Heart right ventricle (tissue), 16 donors: ENCODE measurements at regions of chr5 and their contacts with region 1.

Region 1: DNA sequence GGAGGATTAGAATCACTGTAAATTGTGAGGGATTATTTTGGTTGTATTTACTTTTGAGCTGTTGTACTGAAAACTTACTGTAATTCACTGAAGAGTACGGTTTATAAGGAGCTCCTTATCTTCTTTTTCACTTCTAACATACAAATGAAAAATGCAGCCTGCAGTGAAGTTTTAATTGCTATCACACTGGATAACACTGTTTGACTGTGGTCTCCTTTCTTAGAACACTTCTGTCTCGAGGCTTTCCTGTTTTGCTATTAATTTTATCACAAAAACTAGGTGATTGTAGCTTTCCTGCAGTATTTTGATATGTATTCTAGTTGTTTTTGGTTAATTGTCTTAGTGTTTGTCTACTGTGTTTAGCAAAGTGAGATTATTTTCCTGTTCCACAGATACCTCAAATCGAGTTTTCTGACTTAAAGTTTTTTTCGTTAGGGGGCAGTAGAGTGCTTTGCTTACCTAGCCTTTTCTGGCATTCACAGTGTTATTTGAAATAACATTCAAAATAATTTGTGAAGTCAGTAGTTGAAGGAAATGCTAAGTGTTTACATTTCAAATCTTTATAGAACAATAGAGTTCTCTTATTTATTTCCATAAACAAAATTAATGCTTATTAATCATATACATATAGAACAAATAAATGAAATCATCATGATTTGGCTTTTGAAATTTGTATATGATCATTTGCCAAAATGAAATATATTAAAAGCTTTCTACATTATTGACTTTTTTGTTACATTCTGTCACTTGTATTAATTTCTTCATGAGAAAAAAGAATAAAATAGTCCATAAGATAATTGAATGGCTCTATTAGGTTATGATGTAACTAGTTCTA is 52.9 kb downstream of the COMMD10 start:
- DNase-seq: peak in 1 of 2 donors; percentile 10
- ATAC-seq: peak in 2 of 8 donors; percentile 17 to 49
- H3K4me3 ChIP-seq: no peak overlapping the region
- H3K27ac ChIP-seq: no peak overlapping the region
- H3K4me1 ChIP-seq: peaks cover 0 to 22% (median 9%) of the 10 kb centered on the region in 9 donors
- H3K27me3 ChIP-seq: no peaks in the 10 kb centered on the region
- CTCF ChIP-seq: peak; percentile 75 to 93 (median 81)

Region 2: GRCh38 chr5:116361171-116361967 is 223.6 kb after region 1 on chr5:
- intact Hi-C with region 1: loop called in 1 of 10 experiments (anchors 5 kb)
- DNase-seq: peak; percentile 62 to 78
- ATAC-seq: peak; percentile 59 to 87 (median 77)
- H3K4me3 ChIP-seq: peak overlapping the region in 9 of 10 donors; percentile 33 to 63 (median 48)
- H3K27ac ChIP-seq: peak overlapping the region in 9 of 10 donors; percentile 15 to 80 (median 71)
- H3K4me1 ChIP-seq: peaks cover 14 to 44% (median 38%) of the 10 kb centered on the region in 9 donors
- H3K27me3 ChIP-seq: no peaks in the 10 kb centered on the region
- CTCF ChIP-seq: peak in 8 of 9 donors; percentile 5 to 68 (median 38)

Region 3: DNA sequence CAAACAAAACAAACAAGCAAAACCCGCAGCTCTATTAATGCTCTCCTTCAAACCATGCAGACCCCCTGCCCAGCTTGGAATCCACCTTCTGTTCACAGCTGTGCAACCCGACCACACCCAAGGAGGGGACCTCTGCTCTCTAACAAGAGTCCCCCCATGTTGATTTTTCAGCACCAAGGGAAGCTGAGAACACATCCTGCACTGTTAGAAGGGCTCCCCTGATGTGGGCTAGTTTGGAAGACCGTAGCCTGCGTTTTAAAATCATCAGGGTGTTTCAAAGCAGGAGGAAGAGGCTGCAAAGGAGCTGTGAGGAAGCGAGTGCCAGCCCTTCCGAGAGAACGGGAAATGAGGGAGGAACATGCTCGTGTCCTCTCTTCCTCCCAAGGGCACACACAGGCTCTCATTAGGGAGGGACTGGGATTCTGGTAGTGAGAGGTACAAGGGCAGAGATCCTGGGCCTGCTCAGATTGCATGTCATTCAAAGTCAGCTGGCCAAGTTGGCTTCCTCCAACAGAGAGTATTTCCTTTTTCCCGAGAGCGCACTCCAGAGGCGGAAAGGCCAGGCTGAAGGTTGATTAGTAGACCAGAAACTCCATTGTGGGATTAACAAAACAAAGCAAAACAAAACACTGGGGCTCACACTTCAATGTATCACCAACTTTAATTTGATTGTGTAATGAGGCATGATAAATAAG is 250.9 kb after region 1 on chr5:
- intact Hi-C with region 1: loop called in 1 of 10 experiments (anchors 10 kb)
- DNase-seq: peak in 1 of 2 donors; percentile 64
- ATAC-seq: peak; percentile 81 to 94 (median 90)
- H3K4me3 ChIP-seq: no peak overlapping the region
- H3K27ac ChIP-seq: peak overlapping the region in 2 of 10 donors; percentile 36 to 37
- H3K4me1 ChIP-seq: peaks cover 0 to 19% (median 6%) of the 10 kb centered on the region in 9 donors
- H3K27me3 ChIP-seq: no peaks in the 10 kb centered on the region
- CTCF ChIP-seq: peak in 4 of 9 donors; percentile 8 to 48 (median 36)

Region 4: DNA sequence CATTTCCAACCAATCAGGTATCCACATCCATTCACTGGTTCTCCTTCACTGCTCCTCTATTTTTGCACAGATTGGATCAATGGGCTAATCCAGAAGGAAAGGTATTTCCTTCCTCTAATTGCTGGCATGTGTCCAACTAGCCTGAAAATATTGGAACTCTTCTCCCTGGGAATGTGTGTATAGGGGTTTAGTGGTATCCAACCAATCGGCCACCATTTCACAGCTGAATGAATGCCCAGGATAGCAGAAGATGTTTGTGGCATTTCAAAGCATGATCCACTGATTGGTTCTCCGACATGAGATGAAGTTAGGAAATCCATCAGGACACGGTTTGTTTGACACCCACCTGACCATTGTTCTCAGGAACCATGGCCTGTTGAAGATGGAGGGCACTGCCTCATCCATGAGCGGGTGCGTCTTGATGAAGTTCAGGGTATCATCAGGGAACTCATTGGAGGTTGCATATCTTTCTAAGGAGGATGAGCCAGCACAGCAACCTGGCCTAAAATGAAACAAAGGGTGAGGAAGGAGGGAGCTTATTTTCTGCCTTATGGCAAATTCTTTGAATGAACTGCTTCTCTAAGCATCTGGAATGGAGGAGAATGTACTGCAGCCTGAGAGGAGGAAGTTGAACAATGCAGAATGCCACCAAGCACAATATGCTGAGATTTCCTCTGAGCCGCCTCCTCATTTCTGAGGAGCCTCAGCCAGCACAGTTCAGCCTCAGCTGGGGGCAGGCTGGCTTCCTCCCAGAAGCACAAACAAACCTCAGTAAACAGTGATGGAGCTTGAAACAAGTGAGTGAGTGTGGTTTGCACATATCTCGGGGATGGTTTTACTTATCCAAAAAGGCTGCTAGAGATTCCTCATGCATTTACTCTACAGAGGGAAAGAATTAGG is 342.3 kb after region 1 on chr5:
- intact Hi-C with region 1: loop called in 1 of 10 experiments (anchors 10 kb)
- DNase-seq: no peak
- ATAC-seq: peak in 5 of 8 donors; percentile 41 to 76 (median 69)
- H3K4me3 ChIP-seq: no peak overlapping the region
- H3K27ac ChIP-seq: no peak overlapping the region
- H3K4me1 ChIP-seq: peaks cover 0 to 19% (median 9%) of the 10 kb centered on the region in 9 donors
- H3K27me3 ChIP-seq: no peaks in the 10 kb centered on the region
- CTCF ChIP-seq: no peak

Region 5: DNA sequence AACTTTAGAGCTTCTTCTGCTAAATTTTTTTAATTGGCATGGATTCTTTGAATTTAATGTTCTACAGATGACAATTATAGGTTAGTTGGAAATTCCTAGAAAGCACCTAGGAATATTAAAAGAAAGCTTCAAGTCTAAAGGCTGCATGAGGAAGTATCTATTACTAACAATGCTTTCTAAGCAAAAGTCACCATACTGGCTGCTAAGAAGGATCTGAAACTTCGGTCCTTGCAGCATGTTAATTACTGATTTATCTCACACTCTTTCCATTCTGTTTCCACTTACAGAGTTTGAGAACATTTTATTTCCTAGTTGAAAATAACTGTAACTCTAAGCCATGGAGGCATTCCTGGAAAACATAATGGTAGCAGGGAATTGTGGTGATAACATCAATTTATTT is 428.5 kb after region 1 on chr5:
- intact Hi-C with region 1: loop called in 5 of 10 experiments (anchors 5 to 10 kb)
- DNase-seq: no peak
- ATAC-seq: no peak
- H3K4me3 ChIP-seq: no peak overlapping the region
- H3K27ac ChIP-seq: no peak overlapping the region
- H3K4me1 ChIP-seq: peaks cover 0 to 55% (median 5%) of the 10 kb centered on the region in 9 donors
- H3K27me3 ChIP-seq: peaks cover 0 to 19% (median 0%) of the 10 kb centered on the region in 7 donors
- CTCF ChIP-seq: no peak

Region 6: DNA sequence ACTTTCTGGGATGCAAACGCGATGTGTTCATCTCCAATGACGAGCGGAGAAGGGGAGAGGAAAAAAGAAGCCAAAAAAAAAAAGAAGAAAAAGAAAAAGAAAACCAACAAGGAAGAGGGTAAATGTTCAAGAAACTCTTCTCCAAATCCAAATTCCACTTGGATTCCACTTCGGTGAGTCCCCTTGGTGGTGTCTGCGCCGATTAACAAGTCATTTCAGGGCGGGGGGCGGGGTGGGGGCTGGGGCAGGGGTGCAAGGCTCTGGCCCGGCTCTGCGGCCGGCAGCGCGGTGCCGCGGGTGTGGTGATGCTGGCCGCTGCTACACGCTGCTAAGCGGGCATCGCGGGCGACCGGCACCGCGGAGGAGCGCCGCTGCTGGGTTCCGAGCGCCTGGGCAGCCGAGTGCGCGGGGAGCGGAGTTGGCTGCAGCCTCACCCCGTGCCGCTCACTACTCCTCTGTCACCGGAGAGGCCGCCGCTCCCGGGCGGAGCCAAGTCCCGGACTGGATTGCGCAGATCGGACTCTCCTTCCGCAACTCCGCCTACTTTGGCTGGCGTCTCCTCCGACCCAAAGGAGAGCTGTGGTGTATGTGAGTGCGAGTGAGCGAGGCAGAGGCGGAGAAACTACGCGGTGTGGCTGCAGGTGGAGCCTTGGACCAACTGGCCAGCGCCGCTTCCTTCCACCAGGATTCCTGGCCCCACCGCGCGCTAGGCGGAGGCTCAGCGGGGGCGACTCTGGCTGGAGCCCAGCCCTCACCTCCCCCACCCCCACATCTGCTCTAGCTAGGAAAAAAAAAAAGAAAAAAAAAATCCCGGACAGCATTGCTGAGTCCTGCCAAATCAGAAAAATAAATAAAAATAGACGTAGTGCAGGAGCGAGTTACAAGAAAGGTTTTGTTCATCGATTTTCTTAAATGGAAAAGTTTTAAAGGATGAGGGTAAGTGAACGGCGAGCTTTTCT is 436.9 kb after region 1 on chr5 and contains the start of gene SEMA6A:
- intact Hi-C with region 1: loop called in 5 of 10 experiments (anchors 5 to 10 kb)
- DNase-seq: peak; percentile 92 to 93
- ATAC-seq: peak; percentile 86 to 95 (median 89)
- H3K4me3 ChIP-seq: peak within 1 kb of the TSS; percentile 54 to 85 (median 72)
- H3K27ac ChIP-seq: peak within 1 kb of the TSS; percentile 51 to 91 (median 80)
- H3K4me1 ChIP-seq: peaks cover 0 to 61% (median 38%) of the 10 kb centered on the region in 9 donors
- H3K27me3 ChIP-seq: peaks cover 0 to 80% (median 20%) of the 10 kb centered on the region in 7 donors
- CTCF ChIP-seq: peak in 3 of 9 donors; percentile 12 to 27 (median 13)
- total RNA-seq, gene SEMA6A: 2.9 to 11.3 (median 8.3) TPM

Region 7: DNA sequence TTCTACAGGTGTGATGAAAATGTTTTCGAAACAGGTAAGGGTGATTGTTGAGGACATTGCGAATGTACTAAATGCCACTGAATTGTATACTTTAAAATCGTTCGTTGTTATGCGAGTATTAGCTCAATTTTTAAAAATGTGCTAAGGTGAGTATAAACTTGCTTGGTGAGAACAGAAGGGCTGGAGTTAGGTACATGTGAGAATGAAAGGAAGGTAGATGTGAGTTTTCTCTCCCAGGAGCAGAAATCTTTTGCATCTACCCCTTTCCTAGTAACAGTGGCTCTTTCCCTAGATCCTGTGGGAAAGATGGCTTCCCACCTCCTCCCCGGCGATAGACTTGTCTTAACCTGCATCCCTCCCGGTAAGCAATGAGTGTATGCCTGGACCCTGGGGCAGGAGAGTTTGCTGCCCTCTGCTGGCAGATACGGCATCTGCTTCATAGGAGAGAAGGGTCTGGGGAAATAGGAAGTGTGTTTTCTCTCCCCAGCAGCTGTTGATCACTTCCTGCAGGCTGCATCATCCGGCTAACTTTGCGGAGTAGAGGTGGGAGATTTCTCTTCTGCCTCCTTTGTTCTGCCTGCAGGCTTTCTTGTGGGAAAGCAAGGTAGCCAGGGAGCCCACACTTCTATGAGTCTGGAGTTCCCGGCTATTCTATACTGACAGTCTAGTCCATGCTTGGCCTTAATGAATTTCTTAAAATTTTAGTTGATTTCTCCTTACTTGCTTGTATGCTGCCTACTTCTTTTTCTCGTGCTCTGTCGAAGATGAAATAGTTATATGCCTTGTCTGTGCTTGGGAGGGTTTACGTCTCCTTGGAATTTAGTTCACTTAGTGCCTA is 810.1 kb after region 1 on chr5:
- intact Hi-C with region 1: loop called in 3 of 10 experiments (anchors 5 to 10 kb)
- DNase-seq: peak; percentile 51 to 59
- ATAC-seq: peak; percentile 76 to 91 (median 86)
- H3K4me3 ChIP-seq: no peak overlapping the region
- H3K27ac ChIP-seq: no peak overlapping the region
- H3K4me1 ChIP-seq: peaks cover 0 to 8% (median 0%) of the 10 kb centered on the region in 9 donors
- H3K27me3 ChIP-seq: no peaks in the 10 kb centered on the region
- CTCF ChIP-seq: peak; percentile 32 to 81 (median 77)